Aorta (tissue), 5 donors: ENCODE measurements at regions of chrX and their contacts with region 1.

Region 1: DNA sequence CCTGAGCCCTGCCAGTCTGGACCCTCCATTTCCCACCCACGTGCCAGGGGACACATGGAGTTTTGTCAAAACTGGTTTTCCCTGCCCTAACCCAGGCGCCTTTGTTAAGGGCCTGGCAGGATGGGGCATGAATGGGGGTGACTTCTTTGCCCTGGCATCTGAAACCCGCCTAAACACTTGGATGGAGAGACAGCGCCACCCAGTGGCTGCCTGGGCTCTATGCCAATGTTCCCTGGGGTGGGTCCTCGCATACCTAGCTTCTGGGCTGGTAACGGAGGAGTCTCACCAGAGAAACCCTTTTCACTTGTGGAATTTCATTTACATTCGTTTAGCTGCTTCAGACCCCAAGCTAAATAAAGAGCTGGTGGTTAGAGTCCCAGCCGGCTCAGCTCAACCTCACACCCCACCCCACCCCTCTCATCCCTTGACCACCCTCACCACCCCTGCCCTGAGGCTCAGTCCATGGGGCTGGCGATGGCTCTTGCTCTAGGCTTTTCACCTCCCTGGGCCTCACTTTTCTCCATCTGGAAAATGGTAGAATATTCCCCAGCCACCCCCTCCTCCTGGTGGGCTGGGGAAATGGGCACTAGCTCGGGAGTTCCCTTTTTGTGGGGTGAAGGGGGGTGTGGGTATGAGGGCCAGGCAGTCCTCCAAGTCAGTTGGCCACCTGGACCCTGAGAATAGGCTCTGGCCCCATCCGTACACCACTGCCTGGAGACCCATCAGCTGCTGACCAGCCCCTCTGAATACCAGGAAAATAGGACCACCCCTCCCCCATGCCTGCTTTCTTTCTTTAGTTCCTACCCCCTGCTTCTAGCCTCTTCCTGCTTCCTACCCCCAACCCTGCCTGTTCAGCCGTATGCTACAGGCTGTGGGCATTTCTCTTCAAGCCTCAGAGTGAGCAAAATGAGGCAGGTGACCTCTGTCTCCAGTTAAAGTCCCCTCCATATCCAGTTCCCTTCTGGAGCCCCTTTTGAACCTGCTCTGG is 57.1 kb upstream of the PJA1 start:
- DNase-seq: peak; percentile 75 to 89
- ATAC-seq: no peak
- H3K4me3 ChIP-seq: no peak overlapping the region
- H3K27ac ChIP-seq: no peak overlapping the region
- H3K4me1 ChIP-seq: no peaks in the 10 kb centered on the region
- H3K27me3 ChIP-seq: no peaks in the 10 kb centered on the region

Region 2: DNA sequence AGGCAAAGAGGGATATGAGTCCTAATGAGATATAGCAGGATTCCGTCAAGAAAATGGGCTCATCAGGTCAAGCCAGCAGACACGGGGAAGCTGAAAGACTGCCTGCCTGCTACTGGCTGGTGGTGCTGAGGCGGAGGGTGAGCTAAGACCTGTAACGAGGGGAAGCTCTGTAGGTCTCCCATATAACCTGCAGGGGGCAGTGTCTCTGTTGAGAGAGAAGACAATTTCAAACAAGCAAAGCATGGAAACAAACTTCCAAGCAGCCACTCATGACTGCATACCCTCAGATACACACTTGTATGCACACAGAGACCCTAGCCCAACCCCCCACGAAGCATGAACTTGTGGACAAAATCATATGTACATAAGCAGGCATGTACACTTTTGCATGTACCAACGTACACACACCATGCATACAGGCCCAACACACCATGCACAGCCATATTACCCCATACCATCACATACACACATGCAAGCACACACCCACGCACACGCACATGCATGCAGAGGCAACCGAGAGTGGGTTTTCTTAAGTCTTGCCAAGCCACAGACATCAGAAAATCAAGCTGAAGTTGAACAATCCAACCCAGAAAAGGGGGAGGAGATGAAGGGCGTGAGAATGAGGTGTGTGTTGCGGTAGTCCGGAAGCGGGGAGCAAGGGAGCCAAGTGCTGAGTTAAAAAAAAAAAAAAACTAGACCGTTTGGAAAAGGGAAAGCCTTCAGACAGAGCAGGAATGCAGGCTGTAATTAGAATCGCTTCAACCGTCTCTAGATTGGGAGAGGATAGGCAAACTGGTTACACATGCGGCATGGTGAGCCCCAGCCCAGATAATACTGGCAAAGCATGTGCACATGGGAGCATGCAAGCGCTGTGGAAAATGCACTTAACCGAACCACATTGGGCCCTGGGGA is 128.2 kb before region 1 on chrX:
- intact Hi-C with region 1: loop called (anchors 2 to 10 kb)
- DNase-seq: no peak
- ATAC-seq: no peak
- H3K4me3 ChIP-seq: no peak overlapping the region
- H3K27ac ChIP-seq: no peak overlapping the region
- H3K4me1 ChIP-seq: no peaks in the 10 kb centered on the region
- H3K27me3 ChIP-seq: no peaks in the 10 kb centered on the region

Region 3: GRCh38 chrX:69305333-69306062 is 83.1 kb after region 1 on chrX:
- intact Hi-C with region 1: no loop called
- DNase-seq: no peak
- ATAC-seq: no peak
- H3K4me3 ChIP-seq: no peak overlapping the region
- H3K27ac ChIP-seq: no peak overlapping the region
- H3K4me1 ChIP-seq: no peaks in the 10 kb centered on the region
- H3K27me3 ChIP-seq: no peaks in the 10 kb centered on the region

Region 4: GRCh38 chrX:69387567-69388487 is 165.4 kb after region 1 on chrX:
- intact Hi-C with region 1: loop called in 1 of 2 experiments (anchors 10 kb)
- DNase-seq: peak in 1 of 2 donors; percentile 77
- ATAC-seq: peak; percentile 68
- H3K4me3 ChIP-seq: no peak overlapping the region
- H3K27ac ChIP-seq: no peak overlapping the region
- H3K4me1 ChIP-seq: no peaks in the 10 kb centered on the region
- H3K27me3 ChIP-seq: no peaks in the 10 kb centered on the region